ENCODE measurements at regions of chr20 and their contacts with region 1.

Region 1: GRCh38 chr20:20780127-20780824 is 67.8 kb upstream of the RALGAPA2 start:
- DNase-seq: peak; percentile 91
- ATAC-seq: peak; percentile 94

Region 2: GRCh38 chr20:20712474-20713243 is 67.6 kb before region 1 on chr20 and contains the start of gene RALGAPA2:
- intact Hi-C with region 1: loop called (anchors 10 kb)
- DNase-seq: peak; percentile 98
- ATAC-seq: peak; percentile 99
- total RNA-seq, gene RALGAPA2: 15.5 TPM

Region 3: GRCh38 chr20:20933142-20933958 is 153.1 kb after region 1 on chr20:
- intact Hi-C with region 1: no loop called
- DNase-seq: no peak
- ATAC-seq: no peak

Measured in Right ventricle myocardium superior (tissue), 1 donor.